GM10248 (cell line): ENCODE measurements at regions of chr14 and their contacts with region 1.

Region 1: GRCh38 chr14:75906676-75907280 is 75.0 kb downstream of the TGFB3 start:
- DNase-seq: peak; percentile 62
- CTCF ChIP-seq: peak; percentile 72

Region 2: GRCh38 chr14:75884198-75884611 is 22.6 kb before region 1 on chr14:
- CTCF ChIA-PET with region 1: interaction called, 28 read pairs
- POLR2A ChIA-PET with region 1: no interaction called
- DNase-seq: no peak
- CTCF ChIP-seq: peak; percentile 26

Region 3: GRCh38 chr14:75934998-75935628 is 28.3 kb after region 1 on chr14:
- CTCF ChIA-PET with region 1: interaction called, 27 read pairs
- POLR2A ChIA-PET with region 1: no interaction called
- DNase-seq: no peak
- CTCF ChIP-seq: no peak

Region 4: GRCh38 chr14:75960231-75960630 is 53.5 kb after region 1 on chr14:
- CTCF ChIA-PET with region 1: interaction called, 18 read pairs
- POLR2A ChIA-PET with region 1: no interaction called
- DNase-seq: peak; percentile 65
- CTCF ChIP-seq: no peak

Region 5: GRCh38 chr14:75976826-75977581 is 70.2 kb after region 1 on chr14:
- CTCF ChIA-PET with region 1: interaction called, 167 read pairs
- POLR2A ChIA-PET with region 1: no interaction called
- DNase-seq: no peak
- CTCF ChIP-seq: no peak

Region 6: GRCh38 chr14:76109087-76109880 is 202.5 kb after region 1 on chr14:
- CTCF ChIA-PET with region 1: no interaction called
- POLR2A ChIA-PET with region 1: no interaction called
- DNase-seq: no peak
- CTCF ChIP-seq: no peak

Region 7: GRCh38 chr14:76386915-76387782 is 480.4 kb after region 1 on chr14:
- CTCF ChIA-PET with region 1: interaction called, 10 read pairs
- POLR2A ChIA-PET with region 1: no interaction called
- DNase-seq: peak; percentile 87
- CTCF ChIP-seq: peak; percentile 98